Activated naive CD4-positive, alpha-beta T cell treated with anti-CD3 and anti-CD28 coated beads, Interleukin-2, amount 10 ng/mL, durations not matched to agents 7 days and 5 days (primary cell): ENCODE measurements at regions of chr3 and their contacts with region 1.

Region 1: GRCh38 chr3:187745201-187746058 is at the start of gene BCL6:
- DNase-seq: peak; percentile 92
- H3K4me3 Mint-ChIP-seq: peak within 1 kb of the TSS; percentile 99
- H3K27ac Mint-ChIP-seq: peak within 1 kb of the TSS; percentile 100
- H3K4me1 Mint-ChIP-seq: peaks cover 60% of the 10 kb centered on the region
- H3K27me3 Mint-ChIP-seq: peaks cover 16% of the 10 kb centered on the region

Region 2: DNA sequence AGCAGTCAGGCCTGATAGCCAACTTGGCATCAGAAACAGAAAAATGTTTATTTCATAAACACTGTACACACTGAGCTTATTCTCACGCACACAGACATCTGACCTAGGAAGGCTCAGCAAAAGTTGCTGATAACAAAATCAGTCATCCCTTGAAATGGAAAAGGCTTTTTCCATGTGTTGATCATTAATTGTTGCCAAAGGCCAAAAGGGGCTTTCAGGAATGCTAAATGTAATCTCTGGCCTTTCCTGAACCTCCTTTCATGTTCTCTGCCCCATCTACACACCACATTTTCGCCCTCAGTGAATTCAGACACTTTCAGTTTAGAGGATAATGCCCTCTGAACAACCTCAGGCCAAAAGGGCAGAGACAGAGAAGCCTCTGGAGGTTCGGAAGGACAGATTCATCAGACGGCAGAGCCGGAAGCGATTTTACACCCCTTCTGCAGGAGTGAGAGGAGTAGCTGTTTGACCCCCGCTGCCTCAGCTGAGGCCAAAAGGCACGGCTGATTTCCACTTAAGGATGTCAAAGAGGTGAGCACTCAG is 362.8 kb before region 1 on chr3:
- CTCF ChIA-PET with region 1: no interaction called
- DNase-seq: no peak
- H3K4me3 Mint-ChIP-seq: no peak overlapping the region
- H3K27ac Mint-ChIP-seq: no peak overlapping the region
- H3K4me1 Mint-ChIP-seq: peaks cover 2% of the 10 kb centered on the region
- H3K27me3 Mint-ChIP-seq: peaks cover 22% of the 10 kb centered on the region

Region 3: GRCh38 chr3:187758318-187758955 is 13.0 kb after region 1 on chr3:
- CTCF ChIA-PET with region 1: no interaction called
- DNase-seq: no peak
- H3K4me3 Mint-ChIP-seq: no peak overlapping the region
- H3K27ac Mint-ChIP-seq: no peak overlapping the region
- H3K4me1 Mint-ChIP-seq: peaks cover 4% of the 10 kb centered on the region
- H3K27me3 Mint-ChIP-seq: no peaks in the 10 kb centered on the region

Region 4: DNA sequence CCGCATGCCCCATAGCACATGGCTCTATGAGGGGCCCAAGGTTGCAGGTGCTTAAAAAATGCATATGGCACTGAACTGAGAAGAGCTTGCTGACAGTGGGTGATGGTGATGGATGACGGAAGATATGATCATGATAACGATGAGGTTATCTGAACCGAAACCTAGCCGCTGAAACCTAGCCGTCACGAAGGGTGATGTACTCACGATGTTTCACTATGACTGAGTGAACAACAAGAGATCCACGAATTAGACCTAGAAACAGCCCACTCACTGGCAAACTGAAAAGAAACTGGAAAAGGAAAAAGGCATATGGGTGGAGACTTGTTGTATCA is 57.5 kb after region 1 on chr3:
- CTCF ChIA-PET with region 1: interaction called, 34 read pairs
- DNase-seq: peak; percentile 82
- H3K4me3 Mint-ChIP-seq: peak overlapping the region; percentile 36
- H3K27ac Mint-ChIP-seq: peak overlapping the region; percentile 92
- H3K4me1 Mint-ChIP-seq: peaks cover 88% of the 10 kb centered on the region
- H3K27me3 Mint-ChIP-seq: no peaks in the 10 kb centered on the region

Region 5: DNA sequence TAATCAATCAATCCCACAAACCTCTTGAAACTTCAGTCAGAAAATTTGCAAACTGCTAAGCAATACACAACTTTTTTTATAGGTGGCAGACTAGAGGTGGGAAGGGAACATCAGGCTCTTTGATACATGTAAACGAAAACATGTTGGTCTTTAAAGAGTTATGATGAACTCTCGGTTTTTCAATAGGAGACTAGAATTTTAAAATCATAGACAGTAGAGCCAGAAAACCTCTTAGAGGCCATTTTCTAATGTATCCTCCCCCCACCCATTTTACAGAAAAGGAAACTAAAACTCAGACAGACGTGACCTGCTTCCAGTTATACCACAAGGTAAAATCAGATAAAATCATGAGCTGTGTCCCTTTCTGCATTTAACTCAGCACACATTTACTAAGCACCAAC is 229.4 kb after region 1 on chr3:
- CTCF ChIA-PET with region 1: interaction called, 50 read pairs
- DNase-seq: no peak
- H3K4me3 Mint-ChIP-seq: peak overlapping the region; percentile 56
- H3K27ac Mint-ChIP-seq: peak overlapping the region; percentile 93
- H3K4me1 Mint-ChIP-seq: peaks cover 71% of the 10 kb centered on the region
- H3K27me3 Mint-ChIP-seq: no peaks in the 10 kb centered on the region

Region 6: GRCh38 chr3:188051801-188052168 is 306.4 kb after region 1 on chr3:
- CTCF ChIA-PET with region 1: no interaction called
- DNase-seq: no peak
- H3K4me3 Mint-ChIP-seq: no peak overlapping the region
- H3K27ac Mint-ChIP-seq: no peak overlapping the region
- H3K4me1 Mint-ChIP-seq: peaks cover 32% of the 10 kb centered on the region
- H3K27me3 Mint-ChIP-seq: peaks cover 4% of the 10 kb centered on the region

Region 7: GRCh38 chr3:188749010-188749617 is 1003.7 kb after region 1 on chr3:
- CTCF ChIA-PET with region 1: interaction called, 41 read pairs
- DNase-seq: peak; percentile 68
- H3K4me3 Mint-ChIP-seq: no peak overlapping the region
- H3K27ac Mint-ChIP-seq: no peak overlapping the region
- H3K4me1 Mint-ChIP-seq: peaks cover 3% of the 10 kb centered on the region
- H3K27me3 Mint-ChIP-seq: no peaks in the 10 kb centered on the region